ENCODE measurements at regions of chr3 and their contacts with region 1.

Region 1: DNA sequence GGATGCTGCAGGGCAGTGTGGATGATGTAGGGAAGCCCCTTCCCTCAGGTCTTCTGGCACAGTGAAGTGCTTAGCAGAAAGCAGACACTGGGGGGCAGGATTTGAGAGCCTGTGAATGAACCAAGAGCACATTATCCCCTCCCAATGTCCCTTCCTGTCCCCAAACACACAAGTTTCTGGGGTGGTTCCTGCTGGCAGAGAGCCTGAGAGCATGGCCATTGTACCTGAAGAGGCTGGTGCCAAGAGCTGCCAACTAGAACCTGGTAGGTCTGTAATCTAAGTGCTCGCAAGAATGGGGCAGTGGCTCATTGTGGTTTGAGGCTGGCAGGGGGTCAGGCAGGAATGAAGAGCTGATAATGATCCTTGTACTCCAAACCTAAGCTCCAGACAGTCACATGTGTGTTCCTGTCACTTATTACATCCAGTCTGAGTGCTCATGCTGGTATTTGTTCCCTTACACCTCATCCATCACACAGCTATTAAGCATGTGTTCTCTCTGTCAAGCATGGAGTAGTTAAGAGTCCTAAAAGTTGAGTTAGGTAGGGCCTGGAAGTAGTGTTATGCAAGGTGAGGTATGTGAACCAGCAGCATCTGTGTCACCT is 6.7 kb upstream of the CCR1 start:
- DNase-seq: peak; percentile 57
- ATAC-seq: peak; percentile 6; the same call in 1 of the 2 replicates
- H3K4me3 ChIP-seq: no peak overlapping the region
- H3K27ac ChIP-seq: no peak overlapping the region
- H3K4me1 ChIP-seq: peaks cover 26% of the 10 kb centered on the region
- H3K27me3 ChIP-seq: no peaks in the 10 kb centered on the region
- CTCF ChIP-seq: peak; percentile 66

Region 2: DNA sequence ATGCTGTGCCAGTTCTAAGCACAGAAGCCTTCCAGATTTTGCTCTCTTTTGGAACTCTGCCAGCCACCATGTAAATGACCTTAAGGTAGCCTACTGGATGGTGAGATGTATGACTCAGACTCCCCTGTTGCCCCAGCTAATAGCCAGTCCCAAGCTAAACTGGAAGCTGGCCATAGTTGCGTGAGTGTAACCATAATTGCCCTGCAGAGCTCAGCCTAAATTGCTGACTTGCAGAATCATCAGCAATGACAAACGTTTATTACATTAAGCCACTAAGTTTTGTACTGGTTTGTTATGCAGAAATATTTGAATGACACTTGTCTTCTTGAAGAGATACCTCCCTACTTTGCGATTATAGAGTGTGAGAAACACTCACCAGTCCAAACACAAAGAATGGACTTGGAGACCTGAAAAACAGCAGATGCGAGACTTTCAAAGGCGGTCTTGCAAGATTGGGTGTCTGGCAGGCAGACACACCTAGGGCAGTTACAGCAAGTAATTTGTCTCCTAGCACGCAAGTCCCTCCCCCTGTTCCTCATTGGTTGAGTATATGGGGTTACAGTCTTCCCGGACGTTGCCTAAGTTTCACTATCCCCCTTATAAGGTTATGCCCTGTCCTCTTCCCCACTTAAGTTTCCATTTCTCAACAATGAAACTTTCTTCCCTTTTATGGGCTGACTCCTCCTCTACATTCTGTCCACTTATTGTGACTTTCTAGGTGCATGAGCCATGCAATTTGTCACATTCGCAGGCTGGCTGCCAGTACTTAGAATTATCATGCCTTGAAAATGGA is 104.0 kb before region 1 on chr3:
- CTCF ChIA-PET with region 1: no interaction called
- POLR2A ChIA-PET with region 1: no interaction called
- intact Hi-C with region 1: loop called (anchors 5 kb)
- DNase-seq: peak; percentile 98
- ATAC-seq: peak; percentile 14
- H3K4me3 ChIP-seq: no peak overlapping the region
- H3K27ac ChIP-seq: peak overlapping the region; percentile 81
- H3K4me1 ChIP-seq: peaks cover 99% of the 10 kb centered on the region
- H3K27me3 ChIP-seq: no peaks in the 10 kb centered on the region
- CTCF ChIP-seq: no peak

Region 3: DNA sequence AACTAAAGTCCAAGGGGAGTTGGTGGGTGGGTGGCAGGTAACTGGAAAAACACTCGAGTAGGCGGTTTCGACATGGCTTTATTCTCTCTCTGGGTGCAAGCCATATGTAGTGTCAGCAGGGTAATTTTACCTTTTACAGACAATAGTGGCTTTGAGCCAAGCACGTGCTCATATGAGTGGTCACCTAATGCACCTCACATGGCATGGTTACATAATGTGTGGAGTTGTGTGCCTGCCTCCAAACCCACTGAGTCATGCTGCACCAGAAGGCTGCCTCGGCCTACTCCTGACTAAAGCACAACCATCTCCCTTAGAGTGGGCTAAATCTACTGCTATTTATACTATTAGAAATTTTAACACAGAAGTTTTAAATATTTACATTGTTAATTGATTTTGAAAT is 208.7 kb after region 1 on chr3:
- CTCF ChIA-PET with region 1: no interaction called
- POLR2A ChIA-PET with region 1: no interaction called
- intact Hi-C with region 1: loop called (anchors 5 kb)
- DNase-seq: peak; percentile 73
- ATAC-seq: no peak
- H3K4me3 ChIP-seq: no peak overlapping the region
- H3K27ac ChIP-seq: peak overlapping the region; percentile 59
- H3K4me1 ChIP-seq: peaks cover 47% of the 10 kb centered on the region
- H3K27me3 ChIP-seq: no peaks in the 10 kb centered on the region
- CTCF ChIP-seq: no peak

Measured in PC-3 (cell line).